Activated B cell treated with CpG ODN at 0.5 μM for 24 hours (primary cell): ENCODE measurements at regions of chr7 and their contacts with region 1.

Region 1: DNA sequence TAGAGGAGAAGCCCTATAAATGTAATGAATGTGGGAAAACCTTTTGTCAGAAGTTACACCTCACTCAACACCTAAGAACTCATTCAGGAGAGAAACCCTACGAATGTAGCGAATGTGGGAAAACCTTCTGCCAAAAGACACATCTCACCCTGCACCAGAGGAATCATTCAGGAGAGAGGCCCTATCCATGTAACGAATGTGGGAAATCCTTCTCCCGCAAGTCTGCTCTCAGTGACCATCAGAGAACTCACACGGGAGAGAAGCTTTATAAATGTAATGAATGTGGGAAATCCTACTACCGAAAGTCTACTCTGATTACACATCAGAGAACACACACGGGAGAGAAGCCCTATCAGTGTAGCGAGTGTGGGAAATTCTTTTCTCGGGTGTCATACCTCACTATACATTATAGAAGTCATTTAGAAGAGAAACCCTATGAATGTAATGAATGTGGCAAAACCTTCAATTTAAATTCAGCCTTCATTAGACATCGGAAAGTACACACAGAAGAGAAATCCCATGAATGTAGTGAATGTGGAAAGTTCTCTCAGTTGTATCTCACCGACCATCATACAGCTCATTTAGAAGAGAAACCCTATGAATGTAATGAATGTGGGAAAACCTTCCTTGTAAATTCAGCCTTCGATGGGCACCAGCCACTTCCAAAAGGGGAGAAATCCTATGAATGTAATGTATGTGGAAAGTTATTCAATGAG is 18.9 kb downstream of the RBAK start:
- DNase-seq: no peak
- ATAC-seq: no peak
- H3K4me3 Mint-ChIP-seq: no peak overlapping the region
- H3K27ac Mint-ChIP-seq: no peak overlapping the region
- H3K4me1 Mint-ChIP-seq: no peaks in the 10 kb centered on the region
- H3K27me3 Mint-ChIP-seq: no peaks in the 10 kb centered on the region
- CTCF ChIP-seq: no peak

Region 2: GRCh38 chr7:3762146-3762831 is 1302.3 kb before region 1 on chr7:
- CTCF ChIA-PET with region 1: no interaction called
- POLR2A ChIA-PET with region 1: no interaction called
- intact Hi-C with region 1: no loop called
- DNase-seq: no peak
- ATAC-seq: no peak
- H3K4me3 Mint-ChIP-seq: no peak overlapping the region
- H3K27ac Mint-ChIP-seq: no peak overlapping the region
- H3K4me1 Mint-ChIP-seq: peaks cover 8% of the 10 kb centered on the region
- H3K27me3 Mint-ChIP-seq: peaks cover 22% of the 10 kb centered on the region
- CTCF ChIP-seq: no peak

Region 3: DNA sequence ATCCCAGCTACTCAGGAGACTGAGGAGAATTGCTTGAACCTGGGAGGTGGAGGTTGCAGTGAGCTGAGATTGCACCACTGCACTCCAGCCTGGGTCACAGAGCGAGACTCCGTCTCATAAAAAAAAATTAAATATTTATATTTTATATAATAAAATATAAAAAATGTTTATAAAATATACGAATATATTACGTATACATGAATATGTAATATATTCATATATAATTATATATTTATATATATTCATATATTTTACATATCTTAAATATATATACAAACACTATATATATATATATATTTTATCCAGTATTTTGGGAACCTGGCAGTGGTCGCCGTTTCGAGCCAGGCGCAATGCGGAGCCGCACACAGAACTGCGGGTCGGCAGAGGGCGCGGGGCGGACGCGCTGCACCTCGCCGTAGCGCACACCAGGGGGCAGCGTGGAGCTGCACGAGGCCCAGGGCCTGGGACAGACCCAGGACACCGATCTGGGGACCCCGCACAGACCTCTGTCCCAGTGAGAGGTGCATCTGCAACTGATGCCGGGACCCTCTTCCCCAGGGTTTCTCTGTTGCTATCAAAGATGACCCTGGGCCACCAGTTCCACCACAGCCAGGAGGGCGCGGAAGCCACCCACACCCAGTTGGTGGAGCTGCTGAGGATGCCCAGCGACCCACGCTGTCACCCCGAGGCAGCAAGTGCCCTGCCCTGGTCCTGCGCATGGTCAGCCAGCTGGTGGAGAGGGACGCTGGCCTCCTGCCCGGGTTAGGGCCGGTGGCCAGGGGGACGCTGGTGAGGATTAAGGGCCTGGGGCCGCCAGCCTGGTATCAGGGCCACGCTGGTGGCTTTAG is 266.5 kb before region 1 on chr7:
- CTCF ChIA-PET with region 1: no interaction called
- POLR2A ChIA-PET with region 1: interaction called, 13 read pairs
- intact Hi-C with region 1: no loop called
- DNase-seq: peak; percentile 69
- ATAC-seq: peak; percentile 96
- H3K4me3 Mint-ChIP-seq: no peak overlapping the region
- H3K27ac Mint-ChIP-seq: no peak overlapping the region
- H3K4me1 Mint-ChIP-seq: no peaks in the 10 kb centered on the region
- H3K27me3 Mint-ChIP-seq: no peaks in the 10 kb centered on the region
- CTCF ChIP-seq: peak; percentile 24

Region 4: DNA sequence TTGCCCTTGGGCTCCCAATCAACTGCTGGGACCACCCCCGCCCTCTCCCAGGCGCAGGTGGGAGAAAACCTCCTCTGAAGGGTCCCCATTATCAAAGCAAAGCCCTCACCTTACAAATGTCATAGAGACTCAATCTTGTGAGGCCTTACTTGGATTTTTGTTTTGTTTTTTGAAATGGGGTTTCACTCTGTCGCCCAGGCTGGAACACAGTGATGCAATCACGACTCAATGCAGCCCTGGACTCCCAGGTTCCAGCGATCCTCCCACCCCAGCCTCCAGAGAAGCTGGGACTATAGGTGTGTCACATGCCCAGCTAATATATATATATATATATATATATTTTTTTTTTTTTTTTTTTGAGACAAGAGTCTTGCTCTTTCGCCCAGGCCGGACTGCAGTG is 68.0 kb after region 1 on chr7:
- CTCF ChIA-PET with region 1: no interaction called
- POLR2A ChIA-PET with region 1: no interaction called
- intact Hi-C with region 1: no loop called
- DNase-seq: no peak
- ATAC-seq: no peak
- H3K4me3 Mint-ChIP-seq: no peak overlapping the region
- H3K27ac Mint-ChIP-seq: no peak overlapping the region
- H3K4me1 Mint-ChIP-seq: no peaks in the 10 kb centered on the region
- H3K27me3 Mint-ChIP-seq: peaks cover 5% of the 10 kb centered on the region
- CTCF ChIP-seq: no peak